ENCODE measurements at regions of chr15 and their contacts with region 1.

Region 1: GRCh38 chr15:92077353-92078085 is 224.0 kb downstream of the SLCO3A1 start:
- DNase-seq: peak; percentile 16
- H3K4me3 ChIP-seq: no peak overlapping the region
- H3K27ac ChIP-seq: no peak overlapping the region
- H3K4me1 ChIP-seq: peaks cover 2% of the 10 kb centered on the region
- H3K27me3 ChIP-seq: no peaks in the 10 kb centered on the region
- CTCF ChIP-seq: peak; percentile 55 to 63
- POLR2A ChIP-seq: no peak

Region 2: DNA sequence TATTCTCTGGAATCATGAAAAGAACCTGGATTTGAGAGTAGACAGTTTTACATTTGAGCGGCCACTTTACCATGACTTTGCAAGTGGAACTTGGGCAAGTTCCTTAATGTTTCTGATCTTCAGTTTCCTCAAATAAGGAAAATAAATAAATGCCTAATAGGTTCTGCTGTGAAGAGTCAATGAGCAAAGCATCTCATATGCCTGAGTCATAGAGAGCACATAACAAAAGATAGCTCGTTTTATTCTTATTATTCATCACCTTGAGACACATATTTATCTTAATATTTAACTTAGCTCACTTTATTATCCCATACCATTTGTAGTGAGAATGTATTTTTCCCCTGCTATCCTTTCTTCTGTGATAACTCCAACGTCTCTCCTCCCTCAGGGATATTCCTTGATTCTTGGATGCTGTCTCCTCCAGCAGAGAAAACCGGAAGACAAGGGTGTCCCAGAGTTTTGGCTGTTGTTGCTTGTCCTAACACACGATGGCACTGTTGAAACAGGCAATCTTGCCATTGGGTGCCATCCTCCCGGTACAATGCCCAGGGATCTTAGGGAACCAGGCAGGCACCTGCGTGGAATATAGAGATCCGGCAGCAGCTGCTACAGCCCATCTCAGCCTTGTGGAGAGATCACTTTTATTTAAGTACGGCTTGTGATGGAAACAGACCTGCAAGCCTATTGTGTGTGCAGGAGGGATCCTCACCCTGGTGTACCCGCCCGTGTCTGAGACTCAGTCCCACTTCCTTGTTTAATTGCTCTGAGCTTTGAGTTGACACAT is 1021.8 kb before region 1 on chr15:
- CTCF ChIA-PET with region 1: no interaction called
- POLR2A ChIA-PET with region 1: no interaction called
- dilution Hi-C with region 1: no loop called
- intact Hi-C with region 1: loop called (anchors 1 kb)
- DNase-seq: peak; percentile 47
- H3K4me3 ChIP-seq: no peak overlapping the region
- H3K27ac ChIP-seq: no peak overlapping the region
- H3K4me1 ChIP-seq: no peaks in the 10 kb centered on the region
- H3K27me3 ChIP-seq: peaks cover 17 to 31% of the 10 kb centered on the region in 2 experiments
- CTCF ChIP-seq: peak; percentile 59 to 73
- POLR2A ChIP-seq: no peak

Region 3: DNA sequence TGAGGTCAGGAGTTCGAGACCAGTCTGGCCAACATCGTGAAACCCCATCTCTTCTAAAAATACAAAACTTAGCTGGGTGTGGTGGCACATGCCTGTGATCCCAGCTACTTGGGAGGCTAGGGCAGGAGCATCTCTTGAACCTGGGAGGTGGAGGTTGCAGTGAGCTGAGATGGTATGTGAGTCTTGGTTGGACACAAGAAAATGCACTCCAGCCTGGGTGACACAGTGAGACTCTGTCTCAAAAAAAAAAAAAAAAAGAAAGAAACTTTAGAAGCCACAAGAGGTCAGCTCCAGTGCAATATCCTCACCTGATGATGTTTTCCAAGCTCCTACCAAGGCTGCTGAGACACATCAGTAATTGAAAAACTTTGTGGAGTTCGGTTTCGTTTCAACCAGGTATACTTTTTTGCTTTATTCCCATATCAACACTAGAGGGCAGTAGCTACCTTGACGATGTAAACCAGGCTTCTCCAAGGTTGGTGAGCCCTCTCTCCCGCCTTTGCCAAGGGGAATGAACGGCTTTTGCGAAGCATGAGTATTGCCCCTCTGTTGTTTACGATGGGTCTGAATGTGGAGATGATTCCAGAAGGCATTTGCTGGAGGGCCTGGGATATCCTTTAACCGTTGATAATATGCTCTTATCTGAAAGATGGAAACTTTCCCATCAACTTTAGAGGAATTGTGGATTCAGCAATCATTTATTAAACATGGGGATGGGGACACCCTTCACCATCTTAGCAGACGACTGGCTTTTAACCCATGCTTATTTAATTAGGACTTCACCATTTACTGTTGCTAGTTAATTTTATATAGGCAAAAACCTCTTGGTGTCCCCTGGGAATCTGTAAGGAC is 774.7 kb before region 1 on chr15:
- CTCF ChIA-PET with region 1: interaction called, 21 read pairs
- POLR2A ChIA-PET with region 1: no interaction called
- dilution Hi-C with region 1: no loop called
- intact Hi-C with region 1: loop called (anchors 1 kb)
- DNase-seq: peak; percentile 46
- H3K4me3 ChIP-seq: no peak overlapping the region
- H3K27ac ChIP-seq: no peak overlapping the region
- H3K4me1 ChIP-seq: no peaks in the 10 kb centered on the region
- H3K27me3 ChIP-seq: peaks cover 2 to 3% of the 10 kb centered on the region in 2 experiments
- CTCF ChIP-seq: peak; percentile 53 to 65
- POLR2A ChIP-seq: no peak

Region 4: GRCh38 chr15:91706322-91707032 is 371.0 kb before region 1 on chr15:
- CTCF ChIA-PET with region 1: no interaction called
- POLR2A ChIA-PET with region 1: no interaction called
- dilution Hi-C with region 1: no loop called
- intact Hi-C with region 1: loop called (anchors 5 kb)
- DNase-seq: peak; percentile 2
- H3K4me3 ChIP-seq: no peak overlapping the region
- H3K27ac ChIP-seq: no peak overlapping the region
- H3K4me1 ChIP-seq: no peaks in the 10 kb centered on the region
- H3K27me3 ChIP-seq: no peaks in the 10 kb centered on the region
- CTCF ChIP-seq: peak; percentile 31 to 44
- POLR2A ChIP-seq: no peak

Region 5: DNA sequence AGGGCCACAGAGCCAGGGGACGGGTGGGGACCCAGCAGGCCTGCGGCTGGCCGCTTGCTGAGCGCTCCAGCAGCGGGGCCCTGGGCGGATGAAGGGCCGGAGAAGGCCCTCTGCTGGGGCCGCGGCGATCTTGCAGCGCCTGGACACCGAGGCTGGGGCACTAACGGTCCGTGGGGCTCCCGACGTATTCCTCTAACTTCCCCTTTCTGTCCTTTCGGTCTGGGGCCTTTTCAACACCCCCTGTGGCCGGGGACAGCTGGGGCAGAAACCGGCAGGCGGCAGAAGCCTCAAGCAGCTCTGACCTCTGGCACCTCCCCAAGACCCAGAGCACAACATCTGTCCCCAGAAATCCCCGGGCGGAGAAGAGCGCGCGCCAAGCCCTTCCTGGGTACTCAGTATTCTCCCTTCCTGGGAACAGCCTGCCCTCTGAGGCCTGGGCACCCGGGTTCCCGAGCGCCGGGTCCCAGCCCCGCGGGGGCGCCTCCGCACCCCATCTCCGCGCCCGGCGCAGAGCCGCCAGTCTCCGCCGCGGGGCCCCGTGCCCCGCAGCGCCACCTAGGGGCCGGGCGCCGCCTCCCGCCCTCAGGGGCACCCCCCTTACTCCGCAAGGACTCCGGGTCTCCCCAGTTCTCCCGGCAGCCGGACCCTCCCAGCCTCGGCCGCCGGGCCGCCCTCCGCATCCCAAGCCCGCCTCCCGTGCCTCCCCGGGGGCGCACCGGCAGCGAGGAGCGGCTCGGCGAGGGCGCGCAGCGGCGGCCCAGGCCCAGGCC is 224.6 kb before region 1 on chr15:
- CTCF ChIA-PET with region 1: no interaction called
- POLR2A ChIA-PET with region 1: no interaction called
- dilution Hi-C with region 1: no loop called
- intact Hi-C with region 1: loop called (anchors 1 kb)
- DNase-seq: peak; percentile 21
- H3K4me3 ChIP-seq: peak overlapping the region; percentile 19 to 33 (median 31)
- H3K27ac ChIP-seq: no peak overlapping the region
- H3K4me1 ChIP-seq: peaks cover 3% of the 10 kb centered on the region
- H3K27me3 ChIP-seq: peaks cover 9 to 10% of the 10 kb centered on the region in 2 experiments
- CTCF ChIP-seq: peak; percentile 62
- POLR2A ChIP-seq: no peak

Region 6: DNA sequence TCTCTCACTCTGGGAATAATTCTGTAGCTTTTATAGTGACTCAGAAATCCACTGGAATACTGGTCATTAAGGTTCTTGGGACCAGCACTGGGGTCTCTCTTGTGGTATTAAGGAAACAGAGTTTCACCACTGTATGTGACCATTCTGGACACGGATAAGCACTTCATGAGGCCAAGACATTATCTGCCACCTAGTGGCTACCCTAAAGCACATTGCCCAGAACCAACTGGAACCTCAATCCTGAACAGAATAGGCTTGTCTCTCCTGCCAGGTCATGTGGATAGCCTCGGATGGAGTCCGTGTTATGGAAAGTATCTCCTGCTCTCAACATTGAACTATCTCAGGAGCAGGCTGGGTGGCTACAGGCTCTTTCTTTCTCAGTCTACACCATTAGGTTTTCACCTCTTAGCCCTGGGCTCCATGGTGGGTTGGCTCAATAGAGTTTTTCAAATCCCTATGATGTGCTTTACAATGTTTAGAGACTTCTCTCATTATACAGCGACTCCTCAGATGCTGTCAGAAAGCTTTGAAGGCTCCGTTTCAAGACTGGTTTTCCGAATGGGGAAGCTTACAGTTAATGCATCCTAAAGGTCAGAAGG is 148.6 kb after region 1 on chr15:
- CTCF ChIA-PET with region 1: no interaction called
- POLR2A ChIA-PET with region 1: no interaction called
- dilution Hi-C with region 1: no loop called
- intact Hi-C with region 1: no loop called
- DNase-seq: no peak
- H3K4me3 ChIP-seq: no peak overlapping the region
- H3K27ac ChIP-seq: no peak overlapping the region
- H3K4me1 ChIP-seq: no peaks in the 10 kb centered on the region
- H3K27me3 ChIP-seq: no peaks in the 10 kb centered on the region
- CTCF ChIP-seq: no peak
- POLR2A ChIP-seq: no peak